ENCODE measurements at regions of chr10 and their contacts with region 1.

Region 1: GRCh38 chr10:93376372-93377293 is 105.5 kb downstream of the MYOF start:
- DNase-seq: peak in 26 of 35 experiments; percentile 3 to 82 (median 22)
- ATAC-seq: peak; percentile 58 to 79 (median 72)
- H3K4me3 ChIP-seq: no peak overlapping the region
- H3K4me3 Mint-ChIP-seq: no peak overlapping the region
- H3K27ac ChIP-seq: no peak overlapping the region
- H3K27ac Mint-ChIP-seq: no peak overlapping the region
- H3K4me1 ChIP-seq: peaks cover 0 to 3% of the 10 kb centered on the region in 2 experiments
- H3K4me1 Mint-ChIP-seq: peaks cover 0 to 12% (median 9%) of the 10 kb centered on the region in 3 donors
- H3K27me3 ChIP-seq: no peaks in the 10 kb centered on the region
- H3K27me3 Mint-ChIP-seq: peaks cover 2 to 8% of the 10 kb centered on the region in 2 donors

Region 2: DNA sequence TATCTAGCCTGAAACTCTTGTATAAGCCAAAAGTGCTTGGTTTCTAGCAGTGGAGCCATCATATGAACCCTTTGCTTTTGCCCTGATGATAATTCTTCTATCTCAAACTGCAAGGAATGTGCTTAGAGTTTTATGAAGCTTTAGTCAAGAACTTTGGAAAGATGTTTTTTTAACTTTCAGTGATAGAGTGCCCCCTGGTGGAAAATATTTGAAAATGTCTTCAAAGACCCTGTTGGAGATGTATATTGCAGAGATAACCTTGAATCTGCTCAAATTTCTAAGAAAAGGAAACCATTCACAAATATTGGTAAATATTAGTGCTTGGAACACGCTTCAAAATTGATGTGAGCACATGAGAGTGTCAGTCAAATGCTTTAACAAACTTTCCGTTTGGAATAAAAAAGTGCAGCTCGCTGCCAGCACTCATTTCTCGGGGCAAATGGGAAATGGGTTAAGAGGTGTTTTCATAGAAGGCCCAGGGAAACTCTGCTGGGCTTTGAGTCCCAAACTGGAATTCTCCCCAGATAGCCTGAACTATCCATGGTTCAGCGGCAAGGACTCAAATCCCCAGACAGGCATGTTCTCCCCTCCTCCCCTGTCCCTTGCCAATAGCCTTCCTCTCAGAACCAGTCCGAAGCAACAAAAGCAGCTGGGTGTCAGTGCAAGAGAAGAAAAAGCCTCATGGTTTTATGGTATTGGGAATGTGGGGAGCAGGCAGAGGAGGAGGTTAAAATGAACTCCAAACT is 23.8 kb before region 1 on chr10:
- CTCF ChIA-PET with region 1: interaction called, 3 to 17 read pairs
- POLR2A ChIA-PET with region 1: no interaction called
- DNase-seq: peak in 2 of 35 experiments; percentile 4 to 58
- ATAC-seq: no peak
- H3K4me3 ChIP-seq: no peak overlapping the region
- H3K4me3 Mint-ChIP-seq: no peak overlapping the region
- H3K27ac ChIP-seq: no peak overlapping the region
- H3K27ac Mint-ChIP-seq: no peak overlapping the region
- H3K4me1 ChIP-seq: no peaks in the 10 kb centered on the region
- H3K4me1 Mint-ChIP-seq: peaks cover 0 to 4% (median 0%) of the 10 kb centered on the region in 3 donors
- H3K27me3 ChIP-seq: peaks cover 0 to 3% of the 10 kb centered on the region in 2 experiments
- H3K27me3 Mint-ChIP-seq: peaks cover 9 to 14% of the 10 kb centered on the region in 2 donors

Region 3: DNA sequence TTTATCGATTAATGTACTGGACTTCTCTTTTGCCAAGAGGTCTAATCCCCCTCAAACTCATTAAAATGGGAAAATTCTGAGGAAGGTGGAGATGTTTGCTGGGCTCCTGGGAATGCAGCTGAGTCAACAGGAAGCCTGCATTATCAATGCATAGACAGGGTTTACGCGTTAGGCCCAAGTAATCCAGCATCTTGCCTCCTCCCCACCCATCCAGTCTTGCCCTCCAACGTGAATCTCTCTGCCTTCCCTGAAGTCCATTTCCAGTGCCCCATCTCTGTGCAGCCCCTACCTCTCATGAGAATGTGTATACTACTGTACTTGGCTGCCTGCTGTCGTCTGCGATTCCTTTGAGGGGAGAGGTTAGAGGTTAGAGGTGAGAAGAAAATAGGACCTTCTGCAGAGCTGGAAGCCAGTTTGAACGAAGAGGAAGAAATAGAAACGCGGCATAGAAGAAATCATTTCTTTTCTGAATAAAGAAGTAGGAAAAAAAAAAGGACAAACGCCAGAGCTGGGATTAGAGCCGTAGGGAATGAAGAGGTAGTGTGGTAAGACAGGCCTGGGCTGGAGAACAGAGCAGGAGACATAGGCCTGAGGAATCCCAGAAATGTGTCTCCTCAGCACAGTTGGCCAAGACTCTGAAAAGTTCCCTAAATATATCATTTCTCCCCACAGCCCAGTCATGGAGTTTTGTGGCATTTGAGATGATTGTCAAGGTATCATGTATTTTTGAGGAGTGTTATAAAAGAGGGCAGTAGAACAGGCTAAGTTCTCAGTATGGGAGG is 29.9 kb after region 1 on chr10:
- CTCF ChIA-PET with region 1: interaction called, 4 to 10 read pairs
- POLR2A ChIA-PET with region 1: no interaction called
- DNase-seq: no peak
- ATAC-seq: no peak
- H3K4me3 ChIP-seq: no peak overlapping the region
- H3K4me3 Mint-ChIP-seq: no peak overlapping the region
- H3K27ac ChIP-seq: no peak overlapping the region
- H3K27ac Mint-ChIP-seq: no peak overlapping the region
- H3K4me1 ChIP-seq: peaks cover 21 to 28% of the 10 kb centered on the region in 2 experiments
- H3K4me1 Mint-ChIP-seq: peaks cover 32 to 39% (median 36%) of the 10 kb centered on the region in 3 donors
- H3K27me3 ChIP-seq: no peaks in the 10 kb centered on the region
- H3K27me3 Mint-ChIP-seq: no peaks in the 10 kb centered on the region

Region 4: GRCh38 chr10:93488956-93489528 is 112.4 kb after region 1 on chr10:
- CTCF ChIA-PET with region 1: interaction called, 102 to 182 read pairs
- POLR2A ChIA-PET with region 1: no interaction called
- DNase-seq: no peak
- ATAC-seq: no peak
- H3K4me3 ChIP-seq: no peak overlapping the region
- H3K4me3 Mint-ChIP-seq: no peak overlapping the region
- H3K27ac ChIP-seq: no peak overlapping the region
- H3K27ac Mint-ChIP-seq: no peak overlapping the region
- H3K4me1 ChIP-seq: no peaks in the 10 kb centered on the region
- H3K4me1 Mint-ChIP-seq: no peaks in the 10 kb centered on the region
- H3K27me3 ChIP-seq: peaks cover 0 to 7% of the 10 kb centered on the region in 2 experiments
- H3K27me3 Mint-ChIP-seq: peaks cover 24 to 28% of the 10 kb centered on the region in 2 donors

Region 5: GRCh38 chr10:93503075-93503474 is 126.4 kb after region 1 on chr10:
- CTCF ChIA-PET with region 1: interaction called, 8 to 11 read pairs
- POLR2A ChIA-PET with region 1: interaction called in 1 of 2 experiments, 4 read pairs
- DNase-seq: peak in 1 of 35 experiments; percentile 22
- ATAC-seq: peak in 2 of 4 experiments; percentile 29 to 34
- H3K4me3 ChIP-seq: no peak overlapping the region
- H3K4me3 Mint-ChIP-seq: peak overlapping the region; percentile 6 to 47 (median 23)
- H3K27ac ChIP-seq: peak overlapping the region; percentile 22
- H3K27ac Mint-ChIP-seq: peak overlapping the region; percentile 37 to 79
- H3K4me1 ChIP-seq: peaks cover under 1 to 6% of the 10 kb centered on the region in 2 experiments
- H3K4me1 Mint-ChIP-seq: peaks cover 0 to 22% (median 14%) of the 10 kb centered on the region in 3 donors
- H3K27me3 ChIP-seq: no peaks in the 10 kb centered on the region
- H3K27me3 Mint-ChIP-seq: no peaks in the 10 kb centered on the region

Region 6: DNA sequence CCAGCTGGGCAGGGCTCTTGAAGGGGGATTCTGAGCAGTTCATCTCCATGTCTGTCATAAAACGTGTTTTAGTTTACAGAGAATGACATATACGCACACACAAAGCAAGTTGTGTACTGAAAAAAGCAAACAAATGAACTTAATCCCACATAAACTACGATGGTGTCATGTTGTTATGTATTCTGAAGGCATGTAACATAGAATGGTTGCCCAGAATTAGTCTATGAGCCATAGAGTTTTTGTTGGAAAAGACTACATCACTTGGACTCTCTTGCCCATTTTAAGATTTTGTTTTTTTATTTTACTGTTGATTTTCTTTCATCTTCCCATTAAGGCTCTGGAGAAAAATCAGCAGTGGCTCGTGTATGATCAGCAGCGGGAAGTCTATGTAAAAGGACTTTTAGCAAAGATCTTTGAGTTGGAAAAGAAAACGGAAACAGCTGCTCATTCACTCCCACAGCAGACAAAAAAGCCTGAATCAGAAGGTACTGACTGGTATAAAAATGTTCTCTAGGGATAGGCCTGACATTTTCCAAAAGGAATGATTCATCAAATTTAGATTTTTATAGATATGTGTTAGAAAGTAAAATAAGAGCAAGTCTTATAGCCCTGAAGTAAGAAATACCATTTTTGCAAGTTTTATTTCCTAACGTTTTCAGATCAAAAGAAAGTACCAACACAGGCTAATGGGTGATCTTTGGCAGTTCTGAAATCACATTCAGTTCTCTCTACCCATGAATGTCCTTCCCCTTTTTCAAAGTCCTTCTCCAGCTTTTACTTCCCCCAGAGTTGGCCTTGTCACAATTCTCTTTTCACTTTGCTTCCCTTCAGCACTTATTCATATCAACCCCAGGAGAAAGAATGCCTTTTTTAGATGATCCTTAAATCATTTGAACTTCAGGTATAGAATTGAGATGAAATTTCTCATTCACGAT is 138.7 kb after region 1 on chr10:
- CTCF ChIA-PET with region 1: interaction called, 13 to 37 read pairs
- POLR2A ChIA-PET with region 1: no interaction called
- DNase-seq: no peak
- ATAC-seq: no peak
- H3K4me3 ChIP-seq: no peak overlapping the region
- H3K4me3 Mint-ChIP-seq: no peak overlapping the region
- H3K27ac ChIP-seq: no peak overlapping the region
- H3K27ac Mint-ChIP-seq: no peak overlapping the region
- H3K4me1 ChIP-seq: no peaks in the 10 kb centered on the region
- H3K4me1 Mint-ChIP-seq: peaks cover 0 to 5% (median 0%) of the 10 kb centered on the region in 3 donors
- H3K27me3 ChIP-seq: no peaks in the 10 kb centered on the region
- H3K27me3 Mint-ChIP-seq: no peaks in the 10 kb centered on the region

Measured in T-cell (primary cell).